ENCODE measurements at regions of chr6 and their contacts with region 1.

Region 1: DNA sequence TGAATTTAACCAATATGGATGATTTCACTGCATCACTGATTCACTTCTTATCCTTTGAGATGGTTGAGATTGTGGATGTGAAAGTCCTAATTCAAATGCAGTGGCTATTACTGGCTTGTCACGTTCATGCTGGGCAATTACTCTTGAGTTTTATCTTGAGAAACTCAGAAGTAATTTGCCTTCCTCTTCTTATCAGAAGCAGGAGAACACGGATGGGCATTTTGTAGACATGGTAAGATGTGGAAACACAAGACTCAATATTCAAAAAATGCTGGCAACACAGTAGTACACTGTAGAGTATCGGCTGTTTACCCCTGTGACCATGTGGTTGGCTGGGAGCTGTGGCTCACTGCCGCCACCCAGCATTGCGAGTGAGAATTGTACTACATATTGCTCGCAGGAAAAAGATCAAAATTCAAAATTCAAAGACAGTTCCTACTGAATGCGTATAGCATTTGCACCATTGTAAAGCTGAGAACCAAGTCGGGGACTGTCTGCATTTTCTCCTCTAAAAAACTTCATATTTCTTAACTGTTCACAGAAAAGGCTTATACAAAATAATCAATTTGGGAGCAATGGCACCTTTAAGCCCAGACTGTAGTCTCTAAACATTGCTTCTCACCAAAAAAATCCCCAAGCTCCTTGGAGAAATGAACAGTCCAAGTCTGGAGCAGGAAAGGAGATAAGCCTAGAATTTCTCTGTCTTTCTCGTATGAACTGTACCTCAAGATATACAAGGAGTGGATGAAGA is 61.9 kb upstream of the ELOVL5 start:
- DNase-seq: peak; percentile 70
- ATAC-seq: peak; percentile 96
- H3K4me3 Mint-ChIP-seq: no peak overlapping the region
- H3K27ac Mint-ChIP-seq: no peak overlapping the region
- H3K4me1 Mint-ChIP-seq: peaks cover 2% of the 10 kb centered on the region
- H3K27me3 Mint-ChIP-seq: no peaks in the 10 kb centered on the region
- CTCF ChIP-seq: peak; percentile 71

Region 2: GRCh38 chr6:53273370-53273769 is 137.3 kb before region 1 on chr6:
- CTCF ChIA-PET with region 1: interaction called, 12 read pairs
- POLR2A ChIA-PET with region 1: no interaction called
- intact Hi-C with region 1: no loop called
- DNase-seq: no peak
- ATAC-seq: no peak
- H3K4me3 Mint-ChIP-seq: no peak overlapping the region
- H3K27ac Mint-ChIP-seq: no peak overlapping the region
- H3K4me1 Mint-ChIP-seq: peaks cover 2% of the 10 kb centered on the region
- H3K27me3 Mint-ChIP-seq: no peaks in the 10 kb centered on the region
- CTCF ChIP-seq: no peak

Region 3: DNA sequence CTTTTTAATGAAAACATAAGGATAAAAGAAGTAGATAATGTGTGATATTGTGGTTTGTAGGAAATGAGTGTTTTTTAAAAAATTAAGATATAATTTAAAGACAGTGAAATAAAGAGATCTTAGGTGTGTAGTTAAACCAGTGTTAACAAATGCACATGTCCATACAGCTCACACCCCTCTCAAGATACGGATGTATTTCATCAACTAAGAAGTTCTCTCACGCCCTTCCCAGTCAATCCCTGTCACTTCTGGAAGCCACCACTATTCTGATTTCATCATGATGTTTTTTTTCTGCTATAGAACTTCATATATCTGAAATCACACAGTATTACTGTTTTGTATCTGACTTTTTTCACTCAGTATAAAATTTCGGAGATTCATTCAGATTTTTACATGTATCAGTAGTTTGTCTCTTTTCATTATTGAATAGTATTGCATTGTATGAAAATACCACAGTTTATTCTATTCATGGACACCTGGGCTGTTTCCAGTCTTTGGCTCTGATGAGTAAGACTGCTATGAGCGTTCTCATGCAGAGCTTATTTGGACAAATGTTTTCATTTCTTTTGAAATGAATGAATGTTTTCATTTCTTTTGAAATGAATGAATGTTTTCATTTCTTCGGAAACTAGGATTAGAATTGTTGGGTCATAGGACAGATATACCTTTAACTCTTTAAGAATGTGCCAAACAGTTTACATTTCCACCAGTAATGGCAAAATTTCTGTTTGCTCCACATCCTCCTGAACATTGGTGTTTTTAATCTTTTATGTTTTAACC is 12.2 kb before region 1 on chr6:
- CTCF ChIA-PET with region 1: interaction called, 11 read pairs
- POLR2A ChIA-PET with region 1: no interaction called
- intact Hi-C with region 1: no loop called
- DNase-seq: no peak
- ATAC-seq: no peak
- H3K4me3 Mint-ChIP-seq: no peak overlapping the region
- H3K27ac Mint-ChIP-seq: no peak overlapping the region
- H3K4me1 Mint-ChIP-seq: no peaks in the 10 kb centered on the region
- H3K27me3 Mint-ChIP-seq: peaks cover 5% of the 10 kb centered on the region
- CTCF ChIP-seq: no peak

Region 4: GRCh38 chr6:53556986-53557715 is 146.5 kb after region 1 on chr6:
- CTCF ChIA-PET with region 1: no interaction called
- POLR2A ChIA-PET with region 1: no interaction called
- intact Hi-C with region 1: no loop called
- DNase-seq: no peak
- ATAC-seq: no peak
- H3K4me3 Mint-ChIP-seq: no peak overlapping the region
- H3K27ac Mint-ChIP-seq: no peak overlapping the region
- H3K4me1 Mint-ChIP-seq: no peaks in the 10 kb centered on the region
- H3K27me3 Mint-ChIP-seq: no peaks in the 10 kb centered on the region
- CTCF ChIP-seq: no peak

Region 5: GRCh38 chr6:53647462-53648094 is 236.9 kb after region 1 on chr6:
- CTCF ChIA-PET with region 1: no interaction called
- POLR2A ChIA-PET with region 1: no interaction called
- intact Hi-C with region 1: no loop called
- DNase-seq: peak; percentile 78
- ATAC-seq: peak; percentile 49
- H3K4me3 Mint-ChIP-seq: peak overlapping the region; percentile 48
- H3K27ac Mint-ChIP-seq: peak overlapping the region; percentile 78
- H3K4me1 Mint-ChIP-seq: peaks cover 36% of the 10 kb centered on the region
- H3K27me3 Mint-ChIP-seq: no peaks in the 10 kb centered on the region
- CTCF ChIP-seq: no peak